Activated T-helper 1 cell treated with anti-CD3 and anti-CD28 coated beads, Interleukin-12 subunit alpha, Interleukin-12 subunit beta, Interleukin-2, Interleukin-4 antibody, amounts not matched to agents 30 ng/mL and 10 ng/mL and 1 ng/mL, durations not matched to agents 14 hours and 24 hours and 36 hours (primary cell): ENCODE measurements at regions of chr6 and their contacts with region 1.

Region 1: GRCh38 chr6:112282221-112282620 is 27.9 kb upstream of the LAMA4 start:
- DNase-seq: no peak
- H3K4me3 Mint-ChIP-seq: no peak overlapping the region
- H3K27ac Mint-ChIP-seq: no peak overlapping the region
- H3K4me1 Mint-ChIP-seq: peaks cover 16% of the 10 kb centered on the region
- H3K27me3 Mint-ChIP-seq: peaks cover 55% of the 10 kb centered on the region

Region 2: GRCh38 chr6:112018619-112019416 is 263.4 kb before region 1 on chr6:
- intact Hi-C with region 1: loop called (anchors 10 kb)
- DNase-seq: no peak
- H3K4me3 Mint-ChIP-seq: no peak overlapping the region
- H3K27ac Mint-ChIP-seq: no peak overlapping the region
- H3K4me1 Mint-ChIP-seq: peaks cover 50% of the 10 kb centered on the region
- H3K27me3 Mint-ChIP-seq: no peaks in the 10 kb centered on the region

Region 3: GRCh38 chr6:112203577-112204349 is 78.5 kb before region 1 on chr6:
- intact Hi-C with region 1: loop called (anchors 1 kb)
- DNase-seq: no peak
- H3K4me3 Mint-ChIP-seq: peak overlapping the region; percentile 60
- H3K27ac Mint-ChIP-seq: peak overlapping the region; percentile 68
- H3K4me1 Mint-ChIP-seq: peaks cover 12% of the 10 kb centered on the region
- H3K27me3 Mint-ChIP-seq: peaks cover 5% of the 10 kb centered on the region

Region 4: DNA sequence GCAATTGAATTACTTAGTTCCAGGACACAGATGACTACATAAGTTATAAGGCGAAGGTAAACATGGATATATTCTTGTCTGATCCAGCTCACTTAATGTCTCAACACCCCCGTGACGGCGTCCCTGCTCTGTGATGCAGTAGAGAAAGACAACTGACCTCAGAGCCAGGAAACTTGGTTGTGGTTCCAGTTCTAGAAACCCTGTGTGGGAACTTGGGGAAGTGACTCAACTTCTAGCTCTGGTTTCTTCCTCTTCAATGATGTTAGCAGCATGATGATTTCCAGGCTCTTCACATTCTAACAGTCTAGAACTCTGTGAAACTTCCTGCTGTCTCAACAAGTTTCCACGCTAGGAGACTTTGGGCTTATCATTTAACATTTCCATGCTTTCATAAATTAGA is 46.3 kb before region 1 on chr6:
- intact Hi-C with region 1: loop called (anchors 1 kb)
- DNase-seq: peak; percentile 36
- H3K4me3 Mint-ChIP-seq: no peak overlapping the region
- H3K27ac Mint-ChIP-seq: no peak overlapping the region
- H3K4me1 Mint-ChIP-seq: peaks cover 20% of the 10 kb centered on the region
- H3K27me3 Mint-ChIP-seq: peaks cover 34% of the 10 kb centered on the region

Region 5: GRCh38 chr6:112296122-112296521 is 13.9 kb after region 1 on chr6:
- intact Hi-C with region 1: loop called (anchors 2 kb)
- DNase-seq: no peak
- H3K4me3 Mint-ChIP-seq: no peak overlapping the region
- H3K27ac Mint-ChIP-seq: no peak overlapping the region
- H3K4me1 Mint-ChIP-seq: no peaks in the 10 kb centered on the region
- H3K27me3 Mint-ChIP-seq: peaks cover 52% of the 10 kb centered on the region